ENCODE measurements at regions of chr20 and their contacts with region 1.

Region 1: GRCh38 chr20:25223179-25223661 is 24.7 kb upstream of the PYGB start:
- DNase-seq: no peak
- H3K4me3 ChIP-seq: no peak overlapping the region
- H3K27ac ChIP-seq: peak overlapping the region in 1 of 4 donors; percentile 42
- H3K4me1 ChIP-seq: peaks cover 0 to 29% (median 19%) of the 10 kb centered on the region in 4 donors
- H3K27me3 ChIP-seq: no peaks in the 10 kb centered on the region
- CTCF ChIP-seq: no peak
- EP300 ChIP-seq: no peak
- POLR2A ChIP-seq: no peak

Region 2: DNA sequence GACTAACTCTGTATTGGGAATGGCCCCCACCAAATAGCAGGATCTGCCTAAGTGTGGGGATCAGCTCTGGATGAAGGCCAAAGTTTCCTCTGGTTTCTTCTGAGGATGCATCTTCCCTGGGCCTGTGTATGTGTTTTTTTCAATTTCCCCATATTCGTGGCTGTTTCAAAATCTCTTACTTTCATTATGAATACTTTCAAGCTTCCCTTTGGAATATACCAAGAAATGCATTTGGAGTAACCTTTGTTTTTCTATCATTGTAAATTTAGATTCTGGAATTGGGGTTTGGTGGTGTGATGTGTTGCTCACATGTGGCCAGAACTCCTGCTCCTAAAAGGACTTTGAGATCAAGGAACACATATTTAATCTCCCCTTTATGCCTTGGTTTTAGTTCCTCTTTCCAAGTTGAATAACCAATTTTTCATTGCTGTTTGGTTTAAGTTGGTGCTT is 19.3 kb before region 1 on chr20:
- intact Hi-C with region 1: loop called (anchors 2 kb)
- DNase-seq: no peak
- H3K4me3 ChIP-seq: no peak overlapping the region
- H3K27ac ChIP-seq: no peak overlapping the region
- H3K4me1 ChIP-seq: peaks cover 0 to 32% (median 21%) of the 10 kb centered on the region in 4 donors
- H3K27me3 ChIP-seq: no peaks in the 10 kb centered on the region
- CTCF ChIP-seq: no peak
- EP300 ChIP-seq: no peak
- POLR2A ChIP-seq: no peak

Region 3: DNA sequence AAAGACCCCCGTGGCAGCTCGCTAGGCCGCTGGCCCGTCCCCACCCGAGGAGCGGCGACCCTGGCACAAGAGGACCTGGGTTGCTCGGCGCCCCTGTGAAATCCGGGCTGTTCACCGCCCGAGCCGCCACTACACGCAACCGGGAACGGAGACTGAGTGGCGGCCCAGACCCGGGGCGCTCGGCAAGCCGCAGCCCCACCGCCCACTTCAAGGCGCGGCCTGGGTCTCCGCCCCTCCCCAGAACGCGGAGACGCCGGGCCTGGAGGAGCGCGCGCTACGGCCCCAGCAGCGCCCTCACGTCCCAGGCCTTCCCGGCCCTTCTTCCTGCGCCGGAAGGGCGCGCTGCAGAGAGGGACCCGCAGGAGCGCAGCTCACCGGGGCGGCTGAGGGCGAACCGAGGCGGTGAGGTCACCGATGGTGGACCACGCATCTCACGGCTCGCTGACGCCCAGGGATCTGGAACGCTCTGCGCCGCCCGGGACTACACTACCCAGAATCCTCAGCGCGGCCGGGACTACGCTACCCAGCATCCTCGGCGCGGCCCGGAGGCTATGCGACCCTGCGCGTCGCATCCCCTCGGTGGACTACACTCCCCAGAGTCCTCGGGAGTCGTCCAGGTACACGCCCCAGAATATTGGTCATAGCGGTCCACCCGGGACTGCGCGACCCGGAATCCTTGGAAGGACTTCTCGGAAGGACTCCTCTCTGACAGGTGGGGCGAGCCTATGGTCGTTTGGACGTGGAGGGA is 473.3 kb after region 1 on chr20 and contains the start of gene ZNF337:
- intact Hi-C with region 1: loop called (anchors 10 kb)
- DNase-seq: peak; percentile 97
- H3K4me3 ChIP-seq: peak within 1 kb of the TSS; percentile 67 to 95 (median 88)
- H3K27ac ChIP-seq: peak within 1 kb of the TSS; percentile 89 to 93 (median 92)
- H3K4me1 ChIP-seq: peaks cover 0 to 19% (median 13%) of the 10 kb centered on the region in 4 donors
- H3K27me3 ChIP-seq: no peaks in the 10 kb centered on the region
- CTCF ChIP-seq: no peak
- EP300 ChIP-seq: no peak
- POLR2A ChIP-seq: peak; percentile 59 to 66
- total RNA-seq, gene ZNF337: 15.6 to 18.6 (median 17.2) TPM

Measured in sigmoid colon (tissue), 7 donors.